PC-9 (cell line): ENCODE measurements at regions of chr10 and their contacts with region 1.

Region 1: DNA sequence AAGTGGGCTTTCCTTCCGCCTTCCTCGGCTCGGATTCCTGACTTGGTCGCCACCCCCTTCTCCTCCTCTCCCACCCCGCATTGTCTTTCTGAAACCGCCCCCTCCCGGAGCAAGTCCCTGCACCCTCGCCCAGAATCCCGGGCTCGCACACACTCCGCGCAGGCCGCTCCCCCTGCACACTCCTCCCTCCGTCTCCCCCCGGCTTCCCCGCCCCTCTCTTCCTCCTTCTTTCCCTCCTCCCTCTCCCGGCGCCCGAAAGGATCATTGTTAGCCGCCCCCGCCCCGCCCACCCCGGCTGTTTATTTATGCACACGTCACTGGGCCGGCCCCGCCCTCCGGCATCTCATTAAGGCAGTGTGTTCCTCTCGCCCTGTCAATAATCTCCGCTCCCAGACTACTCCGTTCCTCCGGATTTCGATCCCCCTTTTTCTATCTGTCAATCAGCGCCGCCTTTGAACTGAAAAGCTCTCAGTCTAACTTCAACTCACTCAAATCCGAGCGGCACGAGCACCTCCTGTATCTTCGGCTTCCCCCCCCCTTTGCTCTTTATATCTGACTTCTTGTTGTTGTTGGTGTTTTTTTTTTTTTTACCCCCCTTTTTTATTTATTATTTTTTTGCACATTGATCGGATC is at the start of gene TCF7L2:
- DNase-seq: peak; percentile 90
- H3K4me3 ChIP-seq: peak within 1 kb of the TSS; percentile 75
- H3K27ac ChIP-seq: peak within 1 kb of the TSS; percentile 69
- H3K4me1 ChIP-seq: peaks cover 27% of the 10 kb centered on the region
- H3K27me3 ChIP-seq: no peaks in the 10 kb centered on the region
- CTCF ChIP-seq: no peak
- total RNA-seq, gene TCF7L2: 9.9 and 14.8 TPM in 2 replicates

Region 2: DNA sequence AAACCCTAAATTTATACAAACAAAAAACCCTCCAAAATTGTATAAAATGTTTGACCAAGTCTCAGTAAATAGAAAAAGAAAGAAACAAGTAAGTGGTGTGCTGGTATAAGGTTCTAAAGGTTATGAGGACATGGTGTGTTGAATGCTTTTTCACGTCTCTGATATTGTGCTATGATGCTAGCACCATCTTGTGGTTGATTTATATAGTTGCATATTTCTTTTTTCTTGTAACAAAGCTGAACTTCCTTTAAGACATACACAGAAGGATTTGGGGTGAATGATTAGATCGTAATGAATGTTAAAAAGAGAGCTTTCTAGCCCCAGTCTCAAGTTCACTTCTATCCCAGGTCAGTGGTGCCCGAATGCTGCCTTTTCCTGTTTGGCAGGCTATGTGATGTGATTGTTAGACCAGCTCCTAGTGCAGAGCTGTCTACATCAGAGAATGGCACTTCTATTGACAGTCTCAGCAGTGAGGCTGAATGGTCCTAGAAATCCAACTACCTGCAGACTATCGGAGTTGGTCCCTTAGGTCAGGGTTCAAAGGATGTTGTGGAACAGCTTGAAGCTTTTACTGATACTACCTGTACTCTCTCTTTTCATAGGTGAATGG is 478.0 kb before region 1 on chr10:
- CTCF ChIA-PET with region 1: no interaction called
- POLR2A ChIA-PET with region 1: no interaction called
- intact Hi-C with region 1: loop called (anchors 2 kb)
- DNase-seq: peak in 1 of 2 experiments; percentile 45
- H3K4me3 ChIP-seq: no peak overlapping the region
- H3K27ac ChIP-seq: no peak overlapping the region
- H3K4me1 ChIP-seq: no peaks in the 10 kb centered on the region
- H3K27me3 ChIP-seq: no peaks in the 10 kb centered on the region
- CTCF ChIP-seq: peak; percentile 68

Region 3: GRCh38 chr10:112741830-112742411 is 208.1 kb before region 1 on chr10:
- CTCF ChIA-PET with region 1: no interaction called
- POLR2A ChIA-PET with region 1: no interaction called
- intact Hi-C with region 1: loop called (anchors 10 kb)
- DNase-seq: peak; percentile 27 to 91
- H3K4me3 ChIP-seq: no peak overlapping the region
- H3K27ac ChIP-seq: peak overlapping the region; percentile 78
- H3K4me1 ChIP-seq: peaks cover 41% of the 10 kb centered on the region
- H3K27me3 ChIP-seq: no peaks in the 10 kb centered on the region
- CTCF ChIP-seq: no peak

Region 4: GRCh38 chr10:113087165-113088029 is 137.4 kb after region 1 on chr10:
- CTCF ChIA-PET with region 1: no interaction called
- POLR2A ChIA-PET with region 1: no interaction called
- intact Hi-C with region 1: loop called (anchors 1 kb)
- DNase-seq: peak; percentile 67 to 97
- H3K4me3 ChIP-seq: no peak overlapping the region; the same call in 1 of the 2 replicates
- H3K27ac ChIP-seq: peak overlapping the region; percentile 96
- H3K4me1 ChIP-seq: peaks cover 56% of the 10 kb centered on the region
- H3K27me3 ChIP-seq: no peaks in the 10 kb centered on the region
- CTCF ChIP-seq: no peak

Region 5: GRCh38 chr10:113126229-113127201 is 176.5 kb after region 1 on chr10:
- CTCF ChIA-PET with region 1: no interaction called
- POLR2A ChIA-PET with region 1: no interaction called
- intact Hi-C with region 1: loop called (anchors 2 kb)
- DNase-seq: peak in 1 of 2 experiments; percentile 63
- H3K4me3 ChIP-seq: peak overlapping the region; percentile 51; the same call in 1 of the 2 replicates
- H3K27ac ChIP-seq: no peak overlapping the region
- H3K4me1 ChIP-seq: peaks cover 19% of the 10 kb centered on the region
- H3K27me3 ChIP-seq: no peaks in the 10 kb centered on the region
- CTCF ChIP-seq: peak; percentile 42; the same call in 1 of the 2 replicates

Region 6: DNA sequence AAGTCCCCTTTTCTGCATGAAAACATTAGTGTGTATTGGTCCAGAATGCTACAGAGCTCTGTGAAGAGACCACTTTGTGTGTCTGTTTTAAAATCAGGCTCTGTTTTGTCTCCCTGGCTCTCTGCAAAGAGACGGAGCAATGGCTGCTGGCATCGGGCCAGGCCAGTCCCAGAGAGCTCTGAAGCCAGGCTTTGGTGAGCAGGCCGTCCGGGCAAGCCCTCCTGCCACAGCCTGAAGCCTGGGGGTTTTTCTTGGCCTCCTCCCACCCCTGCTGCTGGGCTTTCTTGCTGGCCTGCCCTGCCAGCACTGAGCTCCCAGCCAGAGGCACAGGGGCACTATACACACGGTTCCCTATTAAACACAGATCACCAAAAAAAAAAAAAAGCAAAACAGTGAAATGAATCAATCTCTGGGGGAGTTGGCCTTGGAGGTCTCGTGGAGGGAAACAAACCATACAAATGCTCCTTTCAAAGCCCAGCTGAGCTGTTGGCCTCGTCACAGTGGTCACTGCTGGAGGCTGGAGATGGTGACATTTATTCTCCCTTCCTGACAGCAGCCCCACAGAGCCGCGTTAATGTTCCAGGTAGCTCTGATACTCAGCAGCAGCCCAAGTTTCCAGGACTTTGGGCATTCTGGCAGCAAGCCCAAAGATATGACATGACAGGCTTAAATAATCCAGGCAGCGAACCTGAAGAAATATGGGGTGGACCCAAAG is 237.2 kb after region 1 on chr10:
- CTCF ChIA-PET with region 1: no interaction called
- POLR2A ChIA-PET with region 1: no interaction called
- intact Hi-C with region 1: no loop called
- DNase-seq: no peak
- H3K4me3 ChIP-seq: no peak overlapping the region
- H3K27ac ChIP-seq: no peak overlapping the region
- H3K4me1 ChIP-seq: no peaks in the 10 kb centered on the region
- H3K27me3 ChIP-seq: no peaks in the 10 kb centered on the region
- CTCF ChIP-seq: no peak